ENCODE measurements at regions of chr18 and their contacts with region 1.

Region 1: DNA sequence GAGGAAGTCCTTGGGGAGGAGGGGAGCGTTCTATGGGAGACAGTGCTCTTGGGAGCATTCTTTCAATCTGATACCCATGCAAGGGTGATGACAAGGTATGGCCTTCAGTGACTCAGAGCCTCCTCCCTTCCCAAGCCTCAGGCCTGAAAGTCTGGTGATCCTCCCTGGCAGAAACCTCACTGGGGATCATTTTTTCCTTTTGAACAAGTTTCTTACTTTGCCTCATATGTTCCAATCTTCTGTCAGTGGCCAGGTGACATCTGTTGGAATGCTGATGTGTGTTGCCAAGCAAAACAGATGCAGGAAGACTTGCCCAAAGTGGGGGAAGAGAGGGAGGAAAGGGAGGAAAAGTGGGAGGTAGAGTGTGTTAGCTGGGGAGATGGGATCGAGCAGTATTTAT is 224.8 kb downstream of the NEDD4L start:
- DNase-seq: no peak
- ATAC-seq: peak in 2 of 4 donors; percentile 13 to 38
- H3K4me3 ChIP-seq: no peak overlapping the region
- H3K27ac ChIP-seq: peak overlapping the region in 2 of 12 donors; percentile 12 to 21
- H3K4me1 ChIP-seq: peaks cover 0 to 52% (median 20%) of the 10 kb centered on the region in 12 donors
- H3K27me3 ChIP-seq: no peaks in the 10 kb centered on the region
- CTCF ChIP-seq: no peak
- POLR2A ChIP-seq: no peak

Region 2: GRCh38 chr18:57975805-57976204 is 293.0 kb before region 1 on chr18:
- intact Hi-C with region 1: no loop called
- DNase-seq: no peak
- ATAC-seq: peak in 2 of 4 donors; percentile 27 to 41
- H3K4me3 ChIP-seq: no peak overlapping the region
- H3K27ac ChIP-seq: peak overlapping the region in 1 of 12 donors; percentile 16
- H3K4me1 ChIP-seq: no peaks in the 10 kb centered on the region
- H3K27me3 ChIP-seq: peaks cover 0 to 3% (median 0%) of the 10 kb centered on the region in 9 donors
- CTCF ChIP-seq: no peak
- POLR2A ChIP-seq: no peak

Region 3: DNA sequence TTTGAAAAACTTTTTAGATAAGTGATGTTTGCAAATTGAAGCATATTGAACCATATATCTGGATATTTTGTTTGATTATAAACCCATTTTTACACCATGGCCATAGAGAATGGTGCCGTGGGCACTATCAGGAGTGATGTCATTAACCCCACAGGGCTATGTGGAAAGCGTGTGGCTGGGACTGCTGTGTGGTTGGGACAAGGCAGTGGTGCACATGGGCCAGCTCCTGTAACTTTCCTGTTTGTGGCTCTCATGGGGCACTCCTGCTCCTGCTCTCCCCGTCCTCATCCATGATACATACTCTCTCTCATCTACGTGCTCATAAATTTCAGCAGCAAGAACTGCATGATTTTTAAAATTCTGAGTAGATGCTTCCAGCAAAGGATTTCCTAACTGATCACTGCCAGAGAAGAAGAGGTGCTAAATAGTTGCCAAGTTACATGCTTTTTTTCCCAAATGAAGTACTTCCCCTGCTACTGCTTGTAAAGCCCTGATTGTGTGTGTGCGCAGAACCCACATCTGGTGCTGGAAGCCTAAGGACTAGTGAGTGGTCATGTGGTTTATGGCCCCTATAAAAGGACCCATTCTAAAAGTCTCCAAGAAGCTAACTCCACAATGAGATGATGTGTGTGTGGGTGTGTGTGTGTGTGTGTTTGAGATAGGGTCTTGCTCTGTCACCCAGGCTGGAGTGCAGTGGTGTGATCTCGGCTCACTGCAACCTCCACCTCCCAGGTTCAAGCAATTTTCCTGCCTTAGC is 16.0 kb after region 1 on chr18:
- intact Hi-C with region 1: loop called in 1 of 10 experiments (anchors 2 kb)
- DNase-seq: no peak
- ATAC-seq: peak in 2 of 4 donors; percentile 13 to 34
- H3K4me3 ChIP-seq: no peak overlapping the region
- H3K27ac ChIP-seq: peak overlapping the region in 7 of 12 donors; percentile 11 to 60 (median 16)
- H3K4me1 ChIP-seq: peaks cover 0 to 64% (median 20%) of the 10 kb centered on the region in 12 donors
- H3K27me3 ChIP-seq: no peaks in the 10 kb centered on the region
- CTCF ChIP-seq: no peak
- POLR2A ChIP-seq: no peak

Region 4: GRCh38 chr18:58416704-58417683 is 148.1 kb after region 1 on chr18:
- intact Hi-C with region 1: no loop called
- DNase-seq: no peak
- ATAC-seq: peak in 1 of 4 donors; percentile 24
- H3K4me3 ChIP-seq: no peak overlapping the region
- H3K27ac ChIP-seq: peak overlapping the region in 1 of 12 donors; percentile 3
- H3K4me1 ChIP-seq: peaks cover 0 to 8% (median 0%) of the 10 kb centered on the region in 12 donors
- H3K27me3 ChIP-seq: no peaks in the 10 kb centered on the region
- CTCF ChIP-seq: no peak
- POLR2A ChIP-seq: no peak

Measured in heart left ventricle (tissue), 16 donors.